ENCODE measurements at regions of chr17 and their contacts with region 1.

Region 1: DNA sequence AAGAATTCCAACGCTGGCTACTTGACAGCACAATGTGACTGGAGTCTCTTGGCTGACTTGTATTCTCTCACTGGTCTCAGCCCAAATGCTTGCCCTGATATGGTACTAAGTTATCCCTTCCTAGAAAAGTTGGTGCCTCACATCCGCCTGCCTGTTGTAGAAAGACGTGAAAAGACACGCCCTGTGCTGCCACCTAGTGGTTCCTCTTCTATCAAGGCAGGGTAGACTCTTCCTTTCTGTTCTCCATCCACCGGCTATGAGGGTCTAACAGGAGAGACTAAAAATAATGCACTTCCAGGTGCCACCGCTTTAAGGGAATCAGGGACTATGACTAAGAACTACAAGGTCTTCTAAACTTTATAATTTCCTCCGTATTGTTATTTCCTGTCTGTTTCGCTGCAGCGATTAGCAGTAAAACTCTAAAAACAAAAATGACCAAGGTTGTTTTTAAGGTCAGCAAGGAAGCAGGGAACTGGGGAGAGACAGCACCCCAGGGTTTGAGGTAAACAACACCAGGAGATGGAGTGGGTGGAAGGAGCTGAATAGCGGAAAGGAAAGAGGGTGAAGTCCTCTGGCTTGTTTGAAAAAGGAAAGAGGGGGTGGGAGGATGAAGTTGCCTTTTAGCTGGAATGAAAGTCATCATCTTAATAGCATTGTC is 109.5 kb downstream of the YPEL2 start:
- DNase-seq: peak; percentile 96
- H3K4me3 Mint-ChIP-seq: peak overlapping the region; percentile 78
- H3K27ac Mint-ChIP-seq: peak overlapping the region; percentile 95
- H3K4me1 Mint-ChIP-seq: peaks cover 49% of the 10 kb centered on the region
- H3K27me3 Mint-ChIP-seq: no peaks in the 10 kb centered on the region

Region 2: DNA sequence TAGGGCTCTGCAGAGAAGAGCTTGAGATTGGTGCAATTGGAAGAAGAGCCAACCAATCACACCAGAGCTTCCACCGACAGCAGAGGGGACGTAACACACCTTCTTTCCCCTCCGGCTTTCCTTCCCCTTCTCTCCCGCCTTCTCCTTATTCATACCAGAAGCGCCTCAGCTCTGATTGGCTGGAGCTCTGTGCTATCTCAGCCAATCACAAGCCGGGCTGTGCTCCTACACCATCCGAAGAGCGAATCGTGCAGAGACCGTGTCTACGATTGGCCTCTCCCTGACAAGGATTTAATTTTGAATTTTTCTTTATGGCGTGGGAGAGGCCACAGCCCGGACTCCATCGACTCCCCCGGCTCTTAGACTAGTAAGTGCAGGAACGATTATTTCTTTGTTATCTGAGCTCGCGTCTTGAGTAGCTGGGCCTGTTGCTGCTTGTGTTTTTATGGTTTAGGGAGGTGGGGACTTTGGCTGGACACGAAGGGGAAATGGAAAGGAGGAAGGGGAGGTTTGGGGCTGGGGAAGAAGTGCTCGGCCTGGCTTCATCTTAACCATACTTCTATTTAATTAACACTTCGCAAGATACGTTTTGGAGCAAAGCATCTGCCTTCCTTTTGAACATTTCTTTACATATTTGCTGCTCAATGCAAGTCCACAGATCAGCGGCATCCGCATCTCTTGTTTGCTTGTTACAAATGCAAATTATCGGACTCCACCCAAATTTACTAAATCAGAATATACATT is 285.3 kb before region 1 on chr17 and contains the start of gene PRR11:
- intact Hi-C with region 1: loop called (anchors 1 kb)
- DNase-seq: peak; percentile 98
- H3K4me3 Mint-ChIP-seq: no peak within 1 kb of the TSS
- H3K27ac Mint-ChIP-seq: no peak within 1 kb of the TSS
- H3K4me1 Mint-ChIP-seq: peaks cover 44% of the 10 kb centered on the region
- H3K27me3 Mint-ChIP-seq: no peaks in the 10 kb centered on the region
- total RNA-seq, gene PRR11: 29.7 and 32.6 TPM in 2 replicates

Region 3: GRCh38 chr17:59311130-59311920 is 129.6 kb before region 1 on chr17:
- intact Hi-C with region 1: loop called (anchors 1 kb)
- DNase-seq: peak; percentile 88
- H3K4me3 Mint-ChIP-seq: no peak overlapping the region
- H3K27ac Mint-ChIP-seq: peak overlapping the region; percentile 8
- H3K4me1 Mint-ChIP-seq: peaks cover 5% of the 10 kb centered on the region
- H3K27me3 Mint-ChIP-seq: peaks cover under 1% of the 10 kb centered on the region

Region 4: DNA sequence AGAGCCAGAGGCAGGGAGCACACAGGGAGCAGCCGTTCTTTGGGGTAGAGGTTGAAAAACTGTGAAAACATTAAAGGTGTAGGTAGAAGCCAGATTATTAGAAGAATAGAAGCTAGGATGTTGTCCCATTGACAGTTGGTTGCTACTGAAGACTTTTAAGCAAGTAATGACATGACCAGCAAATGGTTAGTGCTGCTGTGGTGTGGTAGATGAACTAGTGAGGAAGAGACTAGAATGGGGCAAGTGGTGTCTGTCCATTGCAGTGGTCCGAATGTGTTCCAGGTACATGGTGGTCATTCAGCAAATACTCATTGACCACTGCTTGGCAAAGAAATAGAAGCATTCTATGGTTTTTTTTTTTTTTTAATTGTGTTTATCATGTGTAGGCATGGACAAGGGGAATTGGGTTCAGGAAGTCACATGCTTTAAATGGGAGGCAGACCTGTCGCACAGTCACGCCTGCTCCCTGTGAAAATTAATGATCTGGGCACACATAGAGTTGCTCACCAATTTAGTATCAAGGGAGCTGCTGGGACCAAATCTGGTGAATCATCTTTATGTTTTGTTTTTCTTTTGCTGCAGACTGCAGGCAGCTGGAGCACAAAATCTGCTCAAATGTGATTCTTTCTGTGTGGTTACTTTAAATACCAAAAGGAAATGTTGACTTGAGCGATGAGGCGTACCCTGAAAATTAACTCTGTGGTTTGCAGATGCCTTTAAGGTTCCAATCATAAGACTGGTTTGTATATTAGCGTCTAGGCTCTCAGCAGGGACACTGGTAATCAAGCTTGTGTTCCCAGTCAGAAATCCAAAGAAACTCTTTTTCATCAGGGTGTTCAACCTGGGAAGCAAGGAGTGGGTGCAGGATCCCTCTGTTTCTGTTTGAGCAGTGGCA is 78.8 kb before region 1 on chr17:
- intact Hi-C with region 1: loop called (anchors 1 kb)
- DNase-seq: peak; percentile 86
- H3K4me3 Mint-ChIP-seq: peak overlapping the region; percentile 80
- H3K27ac Mint-ChIP-seq: peak overlapping the region; percentile 96
- H3K4me1 Mint-ChIP-seq: peaks cover 64% of the 10 kb centered on the region
- H3K27me3 Mint-ChIP-seq: no peaks in the 10 kb centered on the region

Region 5: GRCh38 chr17:59427425-59427921 is 13.4 kb before region 1 on chr17:
- intact Hi-C with region 1: loop called (anchors 1 kb)
- DNase-seq: peak; percentile 61
- H3K4me3 Mint-ChIP-seq: no peak overlapping the region
- H3K27ac Mint-ChIP-seq: peak overlapping the region; percentile 31
- H3K4me1 Mint-ChIP-seq: peaks cover 30% of the 10 kb centered on the region
- H3K27me3 Mint-ChIP-seq: peaks cover 2% of the 10 kb centered on the region

Region 6: DNA sequence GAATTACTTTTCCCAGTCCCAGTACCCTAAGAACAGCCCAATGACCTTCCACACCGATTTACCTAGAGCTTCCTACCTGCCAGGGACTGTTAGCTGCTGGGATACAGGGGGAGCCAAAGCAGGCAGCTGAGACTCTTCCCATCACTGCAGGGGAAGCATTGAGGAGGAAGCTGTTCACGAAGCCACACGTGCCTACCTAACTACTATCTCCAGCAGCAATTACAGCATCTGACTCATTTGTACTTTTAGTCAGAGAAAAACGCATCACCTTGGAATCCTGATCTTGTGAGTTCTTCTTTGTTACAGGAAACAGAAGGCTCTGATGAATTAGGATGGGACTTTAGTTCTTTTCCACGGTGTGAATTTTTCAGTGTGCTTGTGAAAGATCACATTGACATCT is 10.8 kb after region 1 on chr17:
- intact Hi-C with region 1: no loop called
- DNase-seq: no peak
- H3K4me3 Mint-ChIP-seq: no peak overlapping the region
- H3K27ac Mint-ChIP-seq: no peak overlapping the region
- H3K4me1 Mint-ChIP-seq: peaks cover 3% of the 10 kb centered on the region
- H3K27me3 Mint-ChIP-seq: peaks cover 3% of the 10 kb centered on the region

Region 7: GRCh38 chr17:59466946-59467801 is 26.3 kb after region 1 on chr17:
- intact Hi-C with region 1: no loop called
- DNase-seq: no peak
- H3K4me3 Mint-ChIP-seq: no peak overlapping the region
- H3K27ac Mint-ChIP-seq: no peak overlapping the region
- H3K4me1 Mint-ChIP-seq: peaks cover 15% of the 10 kb centered on the region
- H3K27me3 Mint-ChIP-seq: no peaks in the 10 kb centered on the region